Uterus (tissue), 4 donors: ENCODE measurements at regions of chr11 and their contacts with region 1.

Region 1: GRCh38 chr11:73177778-73178577 is 35.9 kb upstream of the FCHSD2 start:
- DNase-seq: peak; percentile 77 to 80
- H3K4me3 ChIP-seq: no peak overlapping the region
- H3K27ac ChIP-seq: peak overlapping the region; percentile 29 to 46
- H3K4me1 ChIP-seq: peaks cover 0 to 3% of the 10 kb centered on the region in 2 donors
- H3K27me3 ChIP-seq: no peaks in the 10 kb centered on the region
- CTCF ChIP-seq: peak; percentile 58 to 91 (median 78)
- POLR2A ChIP-seq: peak in 1 of 2 donors; percentile 9

Region 2: GRCh38 chr11:72519220-72519881 is 658.6 kb before region 1 on chr11:
- intact Hi-C with region 1: no loop called
- DNase-seq: no peak
- H3K4me3 ChIP-seq: peak overlapping the region; percentile 7 to 28
- H3K27ac ChIP-seq: peak overlapping the region in 1 of 2 donors; percentile 52
- H3K4me1 ChIP-seq: no peaks in the 10 kb centered on the region
- H3K27me3 ChIP-seq: no peaks in the 10 kb centered on the region
- CTCF ChIP-seq: no peak
- POLR2A ChIP-seq: no peak

Region 3: GRCh38 chr11:72722050-72722748 is 455.8 kb before region 1 on chr11:
- intact Hi-C with region 1: loop called (anchors 10 kb)
- DNase-seq: peak; percentile 86 to 90
- H3K4me3 ChIP-seq: peak overlapping the region; percentile 49 to 67
- H3K27ac ChIP-seq: peak overlapping the region; percentile 86 to 88
- H3K4me1 ChIP-seq: peaks cover 0 to 3% of the 10 kb centered on the region in 2 donors
- H3K27me3 ChIP-seq: no peaks in the 10 kb centered on the region
- CTCF ChIP-seq: peak in 1 of 4 experiments; percentile 3
- POLR2A ChIP-seq: peak; percentile 50 to 59

Region 4: DNA sequence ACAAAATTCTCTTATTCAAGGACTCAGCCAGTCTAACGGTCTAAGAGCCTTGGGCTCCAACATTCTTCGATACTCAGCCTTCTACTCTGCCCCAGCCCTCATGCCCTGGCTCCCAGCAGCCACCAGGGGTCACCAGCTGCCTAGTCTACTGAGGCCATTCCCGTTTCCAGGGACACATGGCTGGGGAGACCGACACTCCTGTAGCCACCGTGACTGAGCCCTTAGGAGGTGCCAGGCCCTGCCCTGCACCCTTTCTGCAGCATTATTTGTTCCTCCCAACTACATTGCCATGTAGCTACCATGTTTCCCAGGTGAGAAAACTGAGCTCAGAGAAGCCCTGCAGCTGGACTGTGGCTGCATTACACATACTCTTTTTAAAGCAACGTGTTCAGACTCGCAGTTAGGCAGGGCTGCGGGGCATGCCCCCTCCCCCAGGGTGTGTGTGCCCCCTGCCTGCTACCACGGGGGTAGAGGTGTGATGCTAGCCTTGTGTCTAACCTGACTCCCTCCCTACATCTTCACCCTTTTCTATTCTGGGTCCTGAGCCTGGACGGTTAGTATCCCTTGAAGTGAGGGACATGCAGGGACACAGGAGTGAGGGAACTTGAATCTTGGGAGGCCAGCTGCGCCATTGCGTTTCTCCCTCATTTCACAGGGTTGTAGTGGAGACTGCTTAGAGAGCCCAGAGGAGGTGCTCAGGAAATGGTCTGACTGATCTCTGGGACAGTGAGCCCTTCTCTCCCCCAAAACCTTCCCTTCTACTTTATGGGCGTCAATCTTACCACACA is 346.3 kb before region 1 on chr11:
- intact Hi-C with region 1: loop called (anchors 5 kb)
- DNase-seq: peak; percentile 85 to 86
- H3K4me3 ChIP-seq: no peak overlapping the region
- H3K27ac ChIP-seq: peak overlapping the region; percentile 76
- H3K4me1 ChIP-seq: peaks cover 0 to 11% of the 10 kb centered on the region in 2 donors
- H3K27me3 ChIP-seq: no peaks in the 10 kb centered on the region
- CTCF ChIP-seq: peak; percentile 93 to 98 (median 96)
- POLR2A ChIP-seq: peak in 1 of 2 donors; percentile 20

Region 5: GRCh38 chr11:73121692-73122091 is 56.3 kb before region 1 on chr11:
- intact Hi-C with region 1: no loop called
- DNase-seq: no peak
- H3K4me3 ChIP-seq: no peak overlapping the region
- H3K27ac ChIP-seq: no peak overlapping the region
- H3K4me1 ChIP-seq: no peaks in the 10 kb centered on the region
- H3K27me3 ChIP-seq: no peaks in the 10 kb centered on the region
- CTCF ChIP-seq: no peak
- POLR2A ChIP-seq: no peak

Region 6: DNA sequence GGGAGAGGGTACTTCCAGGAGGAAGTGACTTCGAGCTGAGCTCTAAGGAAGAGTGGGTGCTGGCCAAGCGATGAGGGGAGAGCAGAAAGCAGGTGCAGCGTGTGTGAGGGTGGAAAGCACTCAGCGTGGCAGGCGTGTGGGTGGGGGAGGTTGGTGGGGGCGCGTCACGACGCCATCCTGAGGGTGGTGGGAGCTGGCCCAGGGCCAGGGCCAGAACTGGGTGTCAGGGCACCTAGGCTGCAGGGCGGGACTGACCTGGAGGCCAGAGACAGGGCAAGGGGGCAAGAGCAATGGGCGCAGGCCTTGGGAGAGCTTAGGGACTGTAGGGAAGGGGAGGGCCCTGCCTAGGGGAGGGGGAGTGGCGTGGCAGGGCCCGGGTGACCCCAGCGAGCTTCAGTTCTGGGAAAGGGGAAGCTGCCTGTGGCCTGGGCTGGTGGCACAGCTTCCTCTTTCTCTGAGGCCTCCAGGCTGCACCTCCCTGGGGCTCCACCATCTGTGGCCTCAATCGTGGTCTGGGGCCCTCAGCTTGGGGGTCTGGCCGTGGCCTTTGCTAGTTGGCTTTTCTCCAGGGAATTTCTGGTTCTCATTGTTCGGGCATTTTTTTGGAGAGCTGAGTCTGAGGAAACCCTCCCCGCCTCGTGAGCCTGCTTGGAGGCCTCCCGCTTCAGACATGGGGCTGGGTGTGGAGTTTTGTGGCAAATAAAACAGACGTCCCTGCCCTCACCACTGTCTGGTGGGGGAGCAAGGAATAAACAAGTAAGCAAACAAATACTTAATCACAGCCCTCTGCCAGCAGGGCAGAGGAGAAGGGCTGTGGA is 207.1 kb after region 1 on chr11:
- intact Hi-C with region 1: no loop called
- DNase-seq: no peak
- H3K4me3 ChIP-seq: no peak overlapping the region
- H3K27ac ChIP-seq: no peak overlapping the region
- H3K4me1 ChIP-seq: no peaks in the 10 kb centered on the region
- H3K27me3 ChIP-seq: no peaks in the 10 kb centered on the region
- CTCF ChIP-seq: no peak
- POLR2A ChIP-seq: no peak